GM10248 (cell line): ENCODE measurements at regions of chr17 and their contacts with region 1.

Region 1: DNA sequence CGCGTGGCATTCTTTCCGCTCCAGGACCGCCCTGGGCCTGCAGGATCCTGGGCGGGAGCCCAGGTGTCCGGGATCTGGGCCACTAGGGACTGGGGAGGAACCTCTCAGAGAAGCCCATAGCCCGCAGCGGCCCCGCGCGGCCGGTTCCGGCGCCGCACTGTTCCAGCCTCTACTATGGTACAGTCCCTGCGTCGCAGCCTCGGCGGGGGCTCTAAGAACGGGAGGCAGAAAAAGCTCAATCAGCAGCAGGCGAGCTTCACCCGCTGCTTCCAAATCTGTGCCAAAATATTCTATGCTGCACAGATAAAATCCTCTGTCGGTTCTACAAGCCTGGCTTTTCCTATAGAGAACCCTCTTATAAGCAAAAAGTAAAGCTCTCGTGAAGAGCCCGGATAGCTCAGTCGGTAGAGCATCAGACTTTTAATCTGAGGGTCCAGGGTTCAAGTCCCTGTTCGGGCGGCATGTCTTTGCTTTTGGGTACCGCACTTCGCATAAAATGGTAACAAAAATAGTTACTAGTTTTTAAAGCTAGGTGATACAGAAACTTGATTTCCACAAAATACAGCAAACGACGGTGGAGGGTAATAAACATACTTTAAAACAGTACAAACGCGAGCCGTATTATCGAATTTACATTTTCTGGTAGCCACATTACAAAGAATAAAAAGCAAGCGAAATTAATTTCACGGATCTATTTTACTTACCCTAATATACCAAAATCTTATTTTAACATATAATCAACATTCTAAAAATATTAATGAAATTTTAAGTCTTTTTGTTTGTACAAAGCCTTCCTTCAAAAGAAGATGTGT is 661 bp upstream of the ALOXE3 start:
- DNase-seq: peak; percentile 87
- CTCF ChIP-seq: peak; percentile 83

Region 2: GRCh38 chr17:7951143-7951803 is 167.7 kb before region 1 on chr17:
- CTCF ChIA-PET with region 1: no interaction called
- POLR2A ChIA-PET with region 1: no interaction called
- DNase-seq: peak; percentile 71
- CTCF ChIP-seq: no peak

Region 3: DNA sequence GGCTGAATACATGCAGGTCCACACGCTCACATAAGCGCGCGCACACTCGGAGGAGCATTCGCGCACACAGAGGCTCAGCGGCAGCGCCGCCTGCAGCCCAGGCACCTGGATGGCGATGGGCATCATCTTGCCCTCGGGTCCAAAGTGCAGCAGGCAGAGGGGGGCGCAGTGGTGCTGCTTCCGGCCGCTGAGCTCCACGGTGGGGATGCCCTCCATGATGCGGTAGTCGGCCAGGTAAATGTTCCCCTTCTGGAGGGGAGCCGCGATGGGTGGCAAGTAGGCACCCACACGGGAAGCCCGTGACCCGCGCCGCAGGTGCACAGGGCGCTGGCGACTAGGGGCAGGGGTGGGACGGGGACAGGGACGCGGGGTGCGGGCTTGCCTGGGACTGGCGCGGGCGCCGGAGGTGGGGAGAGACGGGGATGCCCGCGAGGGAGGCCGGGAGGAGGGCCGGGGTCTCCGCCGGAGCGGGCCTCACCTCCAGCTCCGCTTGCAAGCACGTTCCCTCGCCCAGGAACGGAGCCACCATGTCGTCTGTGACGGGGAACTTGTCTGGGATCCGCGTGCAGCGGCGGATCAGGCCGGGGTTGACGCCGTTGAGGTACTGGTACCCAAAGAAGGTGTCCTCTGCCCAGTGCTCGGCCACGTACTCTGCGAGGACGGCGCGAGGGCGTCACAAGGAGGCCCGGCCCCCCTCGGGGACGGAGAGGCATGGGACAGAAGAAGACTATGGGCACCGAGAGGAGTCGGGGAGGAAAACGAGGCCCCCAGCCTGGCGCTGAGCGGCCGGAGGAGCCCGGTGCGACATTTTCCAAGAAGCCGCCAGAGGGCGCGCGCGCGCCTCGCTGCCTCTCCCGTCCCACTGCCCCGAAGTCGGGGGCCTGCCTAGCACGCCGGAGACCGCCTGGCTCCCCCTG is 39.4 kb before region 1 on chr17:
- CTCF ChIA-PET with region 1: interaction called, 76 read pairs
- POLR2A ChIA-PET with region 1: no interaction called
- DNase-seq: peak; percentile 92
- CTCF ChIP-seq: peak; percentile 93

Region 4: DNA sequence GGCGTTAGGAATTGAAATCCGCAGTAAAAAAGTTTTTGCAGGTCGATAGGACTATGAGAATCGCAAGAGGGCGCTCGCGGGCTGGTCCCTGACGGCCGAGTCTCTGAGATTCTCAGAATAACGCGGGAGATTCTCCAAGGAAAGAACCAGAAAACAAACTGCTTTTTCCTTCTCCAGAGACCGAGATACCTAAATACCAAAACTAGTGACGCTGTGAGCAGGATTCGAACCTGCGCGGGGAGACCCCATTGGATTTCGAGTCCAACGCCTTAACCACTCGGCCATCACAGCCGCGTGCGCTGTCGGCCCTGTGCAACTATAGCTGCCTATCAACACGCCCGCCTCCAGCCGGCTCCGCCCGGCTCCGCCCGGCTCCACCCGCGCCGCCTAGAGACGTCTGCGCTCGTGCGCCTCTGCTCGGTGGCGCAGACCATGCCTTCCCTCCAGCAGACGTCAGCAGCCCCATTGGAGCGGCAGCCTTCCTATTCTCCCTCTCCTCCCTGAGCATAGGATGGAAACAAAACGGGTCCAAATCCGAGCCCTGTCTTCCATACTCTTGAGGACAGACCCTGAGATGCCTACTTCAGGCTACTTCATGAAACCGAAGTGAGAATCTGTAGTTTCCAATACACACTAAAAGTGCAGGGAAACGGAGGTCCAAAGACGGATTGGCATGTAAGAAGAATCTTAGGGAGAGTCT is 19.8 kb after region 1 on chr17:
- CTCF ChIA-PET with region 1: interaction called, 43 read pairs
- POLR2A ChIA-PET with region 1: no interaction called
- DNase-seq: peak; percentile 91
- CTCF ChIP-seq: peak; percentile 67

Region 5: GRCh38 chr17:8173056-8173870 is 54.3 kb after region 1 on chr17:
- CTCF ChIA-PET with region 1: interaction called, 6 read pairs
- POLR2A ChIA-PET with region 1: interaction called, 17 read pairs
- DNase-seq: peak; percentile 82
- CTCF ChIP-seq: no peak

Region 6: DNA sequence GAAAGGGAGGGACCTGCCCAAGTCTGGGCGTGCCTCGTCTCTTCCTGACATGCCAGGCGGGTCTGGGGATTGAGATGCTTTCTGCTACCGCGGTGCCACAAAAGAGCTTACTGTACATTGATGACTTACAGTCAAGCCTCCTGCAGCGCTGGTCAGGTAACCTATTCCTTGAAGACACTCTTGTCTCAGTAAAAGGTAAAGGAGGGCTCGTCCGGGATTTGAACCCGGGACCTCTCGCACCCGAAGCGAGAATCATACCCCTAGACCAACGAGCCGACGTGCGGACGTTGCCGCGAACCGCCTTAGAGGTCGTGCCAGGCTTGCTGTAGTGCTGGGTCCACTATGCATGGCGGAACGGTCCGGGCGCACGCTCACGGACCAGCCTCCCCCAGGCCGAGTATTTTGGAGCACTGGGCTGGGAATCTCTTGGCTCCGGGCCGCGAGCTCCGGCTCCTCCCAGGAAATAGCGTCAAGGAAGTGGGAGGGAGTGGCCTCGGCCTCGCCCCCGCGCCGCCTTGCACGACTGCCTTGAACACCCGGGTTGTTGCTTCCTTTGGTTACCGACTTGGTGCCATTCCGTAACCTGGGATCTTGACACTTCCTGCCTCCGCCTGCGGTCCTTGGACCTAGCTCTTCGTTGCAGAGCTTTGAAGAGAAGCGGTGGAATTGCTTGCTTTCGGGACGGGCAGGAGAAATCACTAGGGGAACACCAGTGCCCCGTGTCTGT is 103.8 kb after region 1 on chr17:
- CTCF ChIA-PET with region 1: interaction called, 20 read pairs
- POLR2A ChIA-PET with region 1: interaction called, 5 read pairs
- DNase-seq: peak; percentile 73
- CTCF ChIP-seq: no peak

Region 7: GRCh38 chr17:8556074-8556473 is 437.1 kb after region 1 on chr17:
- CTCF ChIA-PET with region 1: no interaction called
- POLR2A ChIA-PET with region 1: no interaction called
- DNase-seq: no peak
- CTCF ChIP-seq: no peak